SK-N-SH (cell line): ENCODE measurements at regions of chrX and their contacts with region 1.

Region 1: GRCh38 chrX:119729408-119730201 is 28.8 kb upstream of the SOWAHD start:
- DNase-seq: peak; percentile 66
- H3K4me3 ChIP-seq: no peak overlapping the region
- H3K27ac ChIP-seq: no peak overlapping the region
- H3K4me1 ChIP-seq: peaks cover under 1% of the 10 kb centered on the region in 2 experiments; a peak in 1 of 4 replicates
- H3K27me3 ChIP-seq: peaks cover 42% of the 10 kb centered on the region; the same call in 1 of the 2 replicates
- CTCF ChIP-seq: peak; percentile 77
- EP300 ChIP-seq: no peak
- RAD21 ChIP-seq: peak; percentile 80

Region 2: DNA sequence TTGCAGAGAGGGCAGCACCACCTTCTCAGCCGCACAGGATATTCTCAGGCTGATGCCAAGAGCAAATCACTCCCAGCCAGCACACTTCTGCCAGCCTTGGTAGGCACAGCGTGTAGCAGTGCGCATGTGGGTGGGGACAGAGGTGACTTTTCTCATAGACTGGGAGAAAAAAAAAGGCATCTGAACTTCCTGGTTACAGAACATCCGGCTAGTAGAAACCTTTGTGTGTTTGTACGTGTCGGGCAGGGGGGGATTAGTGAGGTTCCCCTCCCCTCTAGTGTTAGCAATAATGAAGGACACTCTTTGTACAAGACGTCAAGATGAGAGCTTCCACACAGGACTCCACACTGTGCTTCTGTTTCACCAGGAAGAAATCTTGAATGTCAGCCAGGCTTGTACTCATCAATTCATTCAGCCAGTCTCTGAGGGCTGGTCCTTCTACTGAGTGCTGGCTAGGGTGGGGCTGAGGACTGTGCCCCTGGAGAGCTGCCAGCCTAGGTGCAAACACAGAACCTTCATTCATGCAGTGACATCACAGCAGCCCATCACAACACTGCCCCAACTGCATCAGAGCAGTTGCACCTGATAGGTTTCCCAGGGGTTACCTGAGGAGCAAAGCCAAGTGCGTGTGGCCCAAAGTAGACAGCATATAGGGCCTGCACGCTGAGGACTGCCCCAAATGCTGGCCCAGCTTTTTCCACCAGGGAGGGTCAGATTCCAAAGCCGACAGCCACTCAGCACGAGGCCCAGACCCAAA is 226.7 kb before region 1 on chrX:
- CTCF ChIA-PET with region 1: no interaction called
- POLR2A ChIA-PET with region 1: no interaction called
- DNase-seq: no peak
- H3K4me3 ChIP-seq: no peak overlapping the region
- H3K27ac ChIP-seq: peak overlapping the region; percentile 18 to 77; a peak in 2 of 4 replicates
- H3K4me1 ChIP-seq: peaks cover 0 to 4% of the 10 kb centered on the region in 2 experiments; a peak in 1 of 4 replicates
- H3K27me3 ChIP-seq: 0 out of 2 replicates have a peak, but pooled peaks cover 1% of the 10 kb centered on the region
- CTCF ChIP-seq: no peak
- EP300 ChIP-seq: no peak
- RAD21 ChIP-seq: no peak

Region 3: DNA sequence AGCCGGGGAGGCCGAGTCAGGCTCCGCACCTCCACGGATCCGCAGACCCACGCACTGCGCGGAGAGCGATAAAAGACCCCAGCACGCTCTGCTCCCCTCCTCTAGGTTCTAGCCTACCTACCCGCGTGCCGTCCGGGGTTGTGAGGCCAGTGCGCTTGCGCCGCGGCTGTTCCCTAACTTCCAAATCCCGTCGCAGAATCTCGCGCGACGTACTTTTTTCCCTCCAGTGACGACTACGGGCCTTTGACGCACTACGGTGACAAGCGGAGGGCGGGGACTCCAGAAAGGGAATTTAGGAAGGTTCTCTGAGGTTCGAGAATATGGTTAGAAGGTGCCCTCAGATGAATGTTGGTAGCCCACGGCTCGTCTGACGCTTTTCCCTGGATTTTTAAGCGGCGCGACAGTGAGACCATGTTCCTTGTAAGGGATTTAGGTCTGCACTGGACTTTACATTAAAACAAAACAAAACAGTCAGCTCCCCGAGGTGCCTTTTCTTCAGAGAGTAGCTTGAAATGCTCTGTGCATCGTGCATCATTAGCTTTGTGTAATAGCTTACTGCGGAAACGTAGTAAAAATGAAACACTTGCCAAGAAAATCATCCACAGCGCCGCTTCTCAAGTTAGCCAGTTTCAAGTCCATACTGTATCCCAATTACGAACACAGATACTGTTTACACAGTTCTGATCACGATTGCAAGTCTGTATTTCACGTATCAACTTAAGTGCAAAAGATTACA is 123.2 kb before region 1 on chrX and contains the start of gene NKRF:
- CTCF ChIA-PET with region 1: interaction called, 24 read pairs
- POLR2A ChIA-PET with region 1: no interaction called
- DNase-seq: peak; percentile 85
- H3K4me3 ChIP-seq: peak within 1 kb of the TSS; percentile 65 to 70
- H3K27ac ChIP-seq: peak within 1 kb of the TSS; percentile 61 to 86; a peak in 3 of 4 replicates
- H3K4me1 ChIP-seq: no peaks in the 10 kb centered on the region; a peak in 1 of 4 replicates
- H3K27me3 ChIP-seq: peaks cover 10% of the 10 kb centered on the region; the same call in 1 of the 2 replicates
- CTCF ChIP-seq: no peak
- EP300 ChIP-seq: no peak
- RAD21 ChIP-seq: no peak
- polyA plus RNA-seq, gene NKRF: 3.2 and 3.7 TPM in 2 replicates

Region 4: GRCh38 chrX:119617517-119618164 is 112.0 kb before region 1 on chrX:
- CTCF ChIA-PET with region 1: interaction called, 10 read pairs
- POLR2A ChIA-PET with region 1: no interaction called
- DNase-seq: no peak
- H3K4me3 ChIP-seq: no peak overlapping the region
- H3K27ac ChIP-seq: no peak overlapping the region
- H3K4me1 ChIP-seq: no peaks in the 10 kb centered on the region
- H3K27me3 ChIP-seq: peaks cover 4% of the 10 kb centered on the region; the same call in 1 of the 2 replicates
- CTCF ChIP-seq: no peak
- EP300 ChIP-seq: no peak
- RAD21 ChIP-seq: no peak

Region 5: DNA sequence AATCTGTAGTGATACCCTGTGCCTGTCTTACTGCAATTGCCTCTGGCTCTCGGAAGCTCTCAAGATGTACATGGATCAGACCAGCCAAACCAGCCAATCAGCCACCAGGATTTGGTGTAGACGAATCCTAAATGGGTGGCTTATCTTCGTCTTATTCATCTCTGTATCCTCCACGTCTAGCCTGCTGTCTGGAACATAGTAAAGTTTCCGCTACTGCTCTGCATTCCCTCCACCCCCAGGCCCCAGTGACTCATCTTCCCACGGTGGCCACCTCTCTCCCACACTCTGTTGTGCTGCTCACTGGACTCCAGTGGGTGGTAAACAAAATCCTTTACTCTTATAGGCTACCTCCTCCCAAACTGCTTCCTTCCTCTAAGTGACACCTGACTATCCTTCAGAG is 74.5 kb before region 1 on chrX:
- CTCF ChIA-PET with region 1: interaction called, 12 read pairs
- POLR2A ChIA-PET with region 1: no interaction called
- DNase-seq: peak; percentile 36
- H3K4me3 ChIP-seq: no peak overlapping the region
- H3K27ac ChIP-seq: peak overlapping the region; percentile 58
- H3K4me1 ChIP-seq: peaks cover 0 to 2% of the 10 kb centered on the region in 2 experiments; a peak in 1 of 4 replicates
- H3K27me3 ChIP-seq: peaks cover 28% of the 10 kb centered on the region; the same call in 1 of the 2 replicates
- CTCF ChIP-seq: no peak
- EP300 ChIP-seq: no peak
- RAD21 ChIP-seq: no peak

Region 6: GRCh38 chrX:119745283-119745848 is 15.8 kb after region 1 on chrX:
- CTCF ChIA-PET with region 1: interaction called, 12 read pairs
- POLR2A ChIA-PET with region 1: no interaction called
- DNase-seq: no peak
- H3K4me3 ChIP-seq: no peak overlapping the region
- H3K27ac ChIP-seq: no peak overlapping the region
- H3K4me1 ChIP-seq: no peaks in the 10 kb centered on the region
- H3K27me3 ChIP-seq: peaks cover 31% of the 10 kb centered on the region
- CTCF ChIP-seq: no peak
- EP300 ChIP-seq: no peak
- RAD21 ChIP-seq: no peak

Region 7: DNA sequence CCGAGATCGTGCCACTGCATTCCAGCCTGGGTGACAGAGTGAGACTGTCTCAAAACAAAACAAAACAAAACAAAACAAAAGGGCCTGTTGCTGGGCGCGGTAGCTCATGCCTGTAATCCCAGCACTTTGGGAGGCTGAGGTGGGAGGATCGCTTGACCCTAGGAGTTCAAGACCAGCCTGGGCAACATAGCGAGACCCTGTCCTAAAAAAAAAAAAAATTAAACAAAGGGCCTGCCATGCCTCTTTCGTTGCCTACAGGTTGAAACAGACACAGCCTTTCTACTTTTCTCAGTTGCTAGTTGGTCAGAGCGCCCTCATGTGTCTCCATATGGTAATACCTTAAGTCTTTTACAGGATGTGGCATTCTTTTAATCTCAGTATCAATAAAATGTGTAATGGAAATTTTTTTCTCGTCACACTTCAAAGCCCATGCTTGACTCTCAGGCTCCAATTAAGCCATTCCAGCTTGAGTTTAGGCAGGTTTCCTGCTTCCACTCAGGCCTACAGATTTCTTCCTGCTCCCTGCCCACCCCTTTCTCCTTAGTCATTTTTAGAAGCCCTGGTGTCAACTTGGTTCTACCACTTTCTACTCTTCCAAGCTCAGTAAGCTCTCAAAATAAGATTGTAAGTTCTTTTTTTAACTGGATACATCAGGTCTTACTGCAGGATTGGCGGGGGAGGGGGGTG is 24.1 kb after region 1 on chrX:
- CTCF ChIA-PET with region 1: interaction called, 12 read pairs
- POLR2A ChIA-PET with region 1: no interaction called
- DNase-seq: peak; percentile 57
- H3K4me3 ChIP-seq: no peak overlapping the region
- H3K27ac ChIP-seq: no peak overlapping the region
- H3K4me1 ChIP-seq: no peaks in the 10 kb centered on the region
- H3K27me3 ChIP-seq: peaks cover 21% of the 10 kb centered on the region
- CTCF ChIP-seq: peak; percentile 65
- EP300 ChIP-seq: no peak
- RAD21 ChIP-seq: peak; percentile 67

Region 8: DNA sequence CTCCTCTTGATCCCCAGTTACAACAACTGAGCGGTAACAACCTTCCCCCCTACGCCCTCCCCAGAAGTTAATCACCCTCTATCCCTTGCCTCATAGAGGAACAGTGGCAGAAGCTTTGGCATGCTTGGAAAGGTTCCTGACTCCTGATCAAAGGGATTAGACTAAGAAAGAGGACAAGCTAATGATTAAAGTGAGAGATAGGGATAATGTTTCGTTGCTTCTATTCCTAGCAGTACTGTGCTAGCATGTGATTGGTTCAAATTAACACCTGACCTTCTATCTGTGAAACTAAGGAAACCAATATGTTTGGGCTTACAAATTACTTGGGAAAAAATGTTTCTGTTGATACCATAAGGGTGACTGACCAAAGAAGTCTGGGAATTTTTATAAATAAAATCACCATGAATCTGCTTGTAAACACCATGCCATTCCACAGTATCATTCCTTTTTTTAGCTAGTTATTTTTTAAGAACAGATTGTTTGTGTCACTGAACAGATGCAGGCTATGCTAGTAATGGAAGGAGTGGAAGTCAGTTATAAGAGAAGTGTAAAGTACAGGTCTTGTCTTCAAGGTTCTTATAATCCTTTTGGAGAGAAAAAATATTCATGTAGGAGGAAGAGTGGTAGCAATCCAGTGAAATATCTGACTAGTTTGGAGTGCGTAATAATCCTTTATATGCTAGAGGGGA is 621.0 kb after region 1 on chrX:
- CTCF ChIA-PET with region 1: no interaction called
- POLR2A ChIA-PET with region 1: no interaction called
- DNase-seq: no peak
- H3K4me3 ChIP-seq: no peak overlapping the region
- H3K27ac ChIP-seq: no peak overlapping the region
- H3K4me1 ChIP-seq: no peaks in the 10 kb centered on the region
- H3K27me3 ChIP-seq: no peaks in the 10 kb centered on the region; the same call in 1 of the 2 replicates
- CTCF ChIP-seq: no peak
- EP300 ChIP-seq: no peak
- RAD21 ChIP-seq: no peak